Spleen (tissue), 13 donors: ENCODE measurements at regions of chr22 and their contacts with region 1.

Region 1: GRCh38 chr22:24951942-24952836 is at the start of gene KIAA1671:
- DNase-seq: peak; percentile 93
- H3K4me3 ChIP-seq: peak within 1 kb of the TSS; percentile 60 to 84 (median 75)
- H3K27ac ChIP-seq: peak within 1 kb of the TSS in 7 of 8 donors; percentile 36 to 73 (median 65)
- H3K4me1 ChIP-seq: peaks cover 4 to 29% (median 24%) of the 10 kb centered on the region in 6 donors
- H3K27me3 ChIP-seq: peaks cover 0 to 80% (median 31%) of the 10 kb centered on the region in 7 donors
- CTCF ChIP-seq: peak; percentile 78 to 91 (median 88)
- POLR2A ChIP-seq: no peak
- total RNA-seq, gene KIAA1671: 7.4 to 11.9 (median 11.4) TPM

Region 2: GRCh38 chr22:24685531-24686190 is 266.5 kb before region 1 on chr22:
- intact Hi-C with region 1: no loop called
- DNase-seq: no peak
- H3K4me3 ChIP-seq: peak overlapping the region in 2 of 8 donors; percentile 13 to 28
- H3K27ac ChIP-seq: no peak overlapping the region
- H3K4me1 ChIP-seq: no peaks in the 10 kb centered on the region
- H3K27me3 ChIP-seq: peaks cover 0 to 43% (median 10%) of the 10 kb centered on the region in 7 donors
- CTCF ChIP-seq: no peak
- POLR2A ChIP-seq: no peak

Region 3: DNA sequence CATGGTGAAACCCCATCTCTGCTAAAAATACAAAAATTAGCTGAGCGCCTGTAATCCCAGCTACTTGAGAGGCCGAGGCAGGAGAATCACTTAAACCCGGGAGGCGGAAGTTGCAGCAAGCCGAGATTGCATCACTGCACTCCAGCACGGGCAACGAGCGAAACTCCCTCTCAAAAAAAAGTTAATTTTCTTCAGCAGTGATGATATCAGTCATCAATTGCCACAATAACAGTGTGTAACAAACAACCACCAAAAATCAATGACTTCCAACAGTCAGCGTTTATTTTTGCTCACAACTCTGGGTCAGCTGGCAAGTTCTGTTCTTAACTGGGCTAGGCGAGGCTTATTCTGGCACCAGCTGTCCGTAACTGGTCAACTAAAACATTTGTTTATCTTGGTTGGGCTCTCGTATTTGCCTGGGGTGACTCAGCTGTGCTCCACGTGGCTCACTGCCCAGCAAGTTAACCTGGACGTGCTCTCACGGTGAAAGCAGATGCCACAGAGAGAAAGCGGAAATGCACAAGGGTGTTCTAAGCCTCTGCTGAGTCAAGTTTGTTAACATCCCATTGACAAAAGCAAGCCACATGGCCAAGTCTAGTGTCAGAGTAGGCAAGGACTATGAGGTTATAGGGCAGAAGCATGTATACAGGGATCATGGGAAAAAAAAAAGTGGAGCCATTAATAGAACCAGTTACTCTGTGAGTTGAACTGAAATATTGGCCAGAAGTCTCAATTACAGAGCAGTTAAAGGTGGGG is 57.8 kb before region 1 on chr22:
- intact Hi-C with region 1: no loop called
- DNase-seq: no peak
- H3K4me3 ChIP-seq: no peak overlapping the region
- H3K27ac ChIP-seq: peak overlapping the region in 6 of 8 donors; percentile 4 to 69 (median 31)
- H3K4me1 ChIP-seq: peaks cover 0 to 16% (median 7%) of the 10 kb centered on the region in 6 donors
- H3K27me3 ChIP-seq: no peaks in the 10 kb centered on the region
- CTCF ChIP-seq: no peak
- POLR2A ChIP-seq: no peak

Region 4: DNA sequence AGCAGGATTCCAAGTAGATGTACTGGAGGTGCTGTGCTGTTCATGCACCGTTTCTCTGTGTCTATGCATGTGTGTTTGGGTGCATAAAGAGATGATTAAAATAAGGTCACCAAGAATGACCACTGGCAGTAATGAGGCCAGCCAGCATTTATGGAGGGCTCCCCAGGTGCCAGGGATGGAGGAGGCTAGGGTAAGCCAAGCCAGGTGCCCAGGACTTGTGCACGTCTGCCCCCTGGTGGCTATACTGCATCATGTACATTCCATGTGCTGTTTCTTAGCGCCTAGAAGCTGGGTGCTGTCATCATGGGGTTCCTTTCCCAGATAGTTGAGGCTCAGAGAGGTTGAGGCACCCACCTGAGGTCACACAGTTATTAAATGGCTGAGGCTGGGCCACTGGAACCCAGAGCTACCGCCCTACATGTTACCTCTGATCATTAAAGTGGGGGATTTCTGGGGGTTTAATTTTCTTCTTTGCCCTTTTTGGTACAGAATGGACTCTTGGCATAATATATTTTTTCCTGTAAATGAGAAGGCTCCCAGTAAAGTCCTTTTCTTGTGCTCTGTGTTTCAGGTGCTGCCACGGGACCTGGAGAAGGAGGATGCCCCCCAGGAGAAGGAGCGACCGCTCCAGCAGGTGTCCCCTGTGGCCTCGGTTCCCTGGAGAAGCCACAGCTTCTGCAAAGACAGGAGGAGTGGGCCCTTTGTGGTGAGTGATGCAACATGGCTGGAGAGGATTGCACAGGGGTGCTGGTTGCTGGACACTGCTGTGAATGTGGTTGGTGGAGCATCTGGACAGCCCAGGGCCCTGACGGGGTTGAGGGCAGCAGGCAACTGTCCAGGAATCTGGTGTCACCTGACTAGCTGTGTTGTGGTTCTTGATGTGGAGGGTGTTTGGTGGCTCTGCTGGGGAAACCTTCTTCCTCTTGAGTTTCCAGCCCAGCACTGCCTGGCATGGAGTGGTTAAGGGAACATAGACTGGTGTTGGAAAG is 96.8 kb after region 1 on chr22:
- intact Hi-C with region 1: loop called (anchors 5 kb)
- DNase-seq: peak; percentile 83
- H3K4me3 ChIP-seq: no peak overlapping the region
- H3K27ac ChIP-seq: peak overlapping the region in 1 of 8 donors; percentile 2
- H3K4me1 ChIP-seq: peaks cover 7 to 48% (median 17%) of the 10 kb centered on the region in 6 donors
- H3K27me3 ChIP-seq: no peaks in the 10 kb centered on the region
- CTCF ChIP-seq: peak; percentile 56 to 88 (median 78)
- POLR2A ChIP-seq: no peak

Region 5: GRCh38 chr22:25067851-25068421 is 115.7 kb after region 1 on chr22:
- intact Hi-C with region 1: no loop called
- DNase-seq: peak; percentile 90
- H3K4me3 ChIP-seq: no peak overlapping the region
- H3K27ac ChIP-seq: peak overlapping the region; percentile 1 to 86 (median 53)
- H3K4me1 ChIP-seq: peaks cover 0 to 64% (median 26%) of the 10 kb centered on the region in 6 donors
- H3K27me3 ChIP-seq: peaks cover 0 to 24% (median 0%) of the 10 kb centered on the region in 7 donors
- CTCF ChIP-seq: no peak
- POLR2A ChIP-seq: no peak

Region 6: GRCh38 chr22:25148149-25148691 is 196.0 kb after region 1 on chr22:
- intact Hi-C with region 1: no loop called
- DNase-seq: no peak
- H3K4me3 ChIP-seq: no peak overlapping the region
- H3K27ac ChIP-seq: no peak overlapping the region
- H3K4me1 ChIP-seq: peaks cover 0 to 5% (median 0%) of the 10 kb centered on the region in 6 donors
- H3K27me3 ChIP-seq: no peaks in the 10 kb centered on the region
- CTCF ChIP-seq: no peak
- POLR2A ChIP-seq: no peak